Ascending aorta (tissue), 2 donors: ENCODE measurements at regions of chr5 and their contacts with region 1.

Region 1: DNA sequence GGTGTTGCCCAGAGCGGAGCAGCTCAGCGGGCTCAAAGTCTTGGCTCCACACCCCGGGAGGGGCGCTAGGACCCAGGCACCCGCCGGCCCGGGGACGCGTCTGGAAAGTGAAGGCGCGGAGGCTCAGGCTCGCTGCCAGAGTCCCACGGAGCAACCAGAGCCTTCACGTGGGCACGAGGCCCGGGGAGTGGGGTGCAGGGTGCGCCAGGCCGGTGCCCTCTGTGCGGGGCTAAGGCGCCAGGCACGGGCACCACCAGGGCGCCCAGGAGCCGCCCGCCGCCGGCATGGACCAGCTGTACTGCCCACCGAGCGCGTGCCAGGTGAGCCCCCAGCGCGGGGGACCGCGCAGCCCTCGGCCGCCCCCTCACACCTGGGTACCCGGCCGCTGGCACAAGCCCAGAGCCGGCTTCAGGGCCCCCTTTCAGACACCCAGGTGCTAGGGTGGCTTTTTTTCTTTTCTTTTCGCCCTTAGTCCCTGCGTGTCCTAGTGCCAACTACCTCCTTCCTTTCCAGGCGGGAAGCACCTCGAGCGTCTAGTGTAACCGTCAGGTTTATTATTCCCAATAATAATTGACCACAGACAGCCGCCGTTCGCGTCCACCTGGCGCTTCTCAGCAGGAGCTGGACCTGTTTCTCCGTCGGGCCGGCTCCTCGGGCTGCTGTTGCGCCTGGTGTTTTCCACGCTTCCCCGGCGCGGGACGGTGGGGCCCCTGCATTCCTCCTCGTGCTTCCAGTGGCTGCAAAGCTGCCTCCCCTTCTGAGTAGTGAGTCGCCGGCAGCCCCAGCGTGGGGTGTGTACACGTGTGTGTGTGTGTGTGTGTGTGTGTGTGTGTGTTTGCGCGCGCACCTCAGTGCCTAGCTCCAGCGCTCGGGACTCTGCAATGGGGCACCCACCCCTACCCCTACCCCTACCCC is 30.1 kb upstream of the PDE8B start:
- DNase-seq: peak in 1 of 2 donors; percentile 76
- H3K4me3 ChIP-seq: peak overlapping the region; percentile 54 to 79
- H3K27ac ChIP-seq: peak overlapping the region; percentile 25 to 64
- H3K4me1 ChIP-seq: no peaks in the 10 kb centered on the region
- H3K27me3 ChIP-seq: no peaks in the 10 kb centered on the region
- CTCF ChIP-seq: no peak

Region 2: DNA sequence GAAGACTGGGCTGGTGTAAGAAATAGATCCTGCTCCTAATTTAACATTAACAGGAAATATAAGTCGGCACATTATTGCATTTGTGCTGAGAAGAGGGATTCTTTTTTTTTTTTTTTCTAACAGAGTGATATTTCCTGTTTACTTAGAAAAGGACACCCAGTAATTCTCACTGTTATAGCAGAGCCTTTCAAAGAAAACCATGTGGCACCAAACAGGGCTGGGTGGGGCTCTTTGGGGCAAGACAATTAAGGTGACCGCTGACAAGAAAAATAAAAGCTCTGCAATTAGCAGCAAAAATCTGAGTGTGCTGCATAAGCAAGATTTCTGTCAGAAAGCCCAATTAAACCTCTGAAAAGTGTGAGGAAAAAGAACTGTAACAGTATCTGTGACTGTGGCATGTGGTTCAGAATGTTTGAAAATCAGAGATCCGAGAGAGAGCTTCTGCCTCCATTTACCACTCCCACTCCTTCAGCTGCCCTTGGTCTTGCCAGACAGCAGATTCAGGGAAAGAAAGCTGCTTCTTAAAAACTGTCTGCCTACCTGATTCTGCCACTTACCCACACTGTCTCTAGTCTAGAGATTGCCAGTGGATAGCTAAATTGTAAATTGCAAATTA is 854.4 kb before region 1 on chr5:
- intact Hi-C with region 1: no loop called
- DNase-seq: peak in 1 of 2 donors; percentile 64
- H3K4me3 ChIP-seq: no peak overlapping the region
- H3K27ac ChIP-seq: no peak overlapping the region
- H3K4me1 ChIP-seq: no peaks in the 10 kb centered on the region
- H3K27me3 ChIP-seq: no peaks in the 10 kb centered on the region
- CTCF ChIP-seq: no peak

Region 3: DNA sequence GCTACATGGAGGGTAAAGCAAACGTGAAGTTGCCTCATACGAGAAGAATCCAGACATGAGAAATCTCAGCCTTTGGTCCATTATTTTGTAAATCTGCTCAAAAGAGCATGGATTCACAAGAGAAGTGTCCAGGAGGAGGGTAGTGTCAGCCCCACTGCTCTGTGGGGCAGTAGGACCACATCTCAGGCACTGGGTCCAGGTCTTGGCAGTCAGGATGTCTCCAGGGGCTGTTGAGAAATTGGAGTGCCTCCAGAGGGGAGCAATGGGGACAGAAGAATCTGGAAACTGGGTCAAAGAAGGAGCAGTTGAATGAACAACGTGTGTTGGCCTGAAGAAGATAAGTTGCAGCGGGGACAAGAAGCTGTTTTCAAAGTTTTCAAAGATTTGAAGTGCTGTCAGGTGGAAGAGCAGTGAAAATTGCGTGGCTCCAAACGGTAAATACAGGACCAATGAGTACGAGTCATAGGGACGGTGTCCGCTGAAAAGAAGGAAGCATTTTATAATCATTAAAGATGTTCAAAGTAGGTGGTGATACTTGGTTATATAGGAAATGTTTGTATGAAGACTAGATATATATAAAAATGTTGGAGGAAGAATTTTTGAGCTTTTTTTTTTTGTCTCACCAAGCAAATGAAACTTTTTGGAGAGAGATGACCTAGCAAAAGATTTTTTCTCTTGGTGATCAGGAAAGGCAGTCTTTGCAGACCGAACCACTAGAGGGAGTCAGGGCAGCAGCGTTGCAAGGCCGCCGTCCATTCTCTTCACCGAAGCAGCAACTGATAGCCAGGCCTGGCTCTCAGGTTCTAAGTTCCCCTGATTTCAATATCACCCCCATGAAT is 36.2 kb before region 1 on chr5:
- intact Hi-C with region 1: loop called (anchors 5 kb)
- DNase-seq: peak in 1 of 2 donors; percentile 86
- H3K4me3 ChIP-seq: no peak overlapping the region
- H3K27ac ChIP-seq: peak overlapping the region; percentile 54 to 58
- H3K4me1 ChIP-seq: peaks cover 0 to 6% of the 10 kb centered on the region in 2 donors
- H3K27me3 ChIP-seq: no peaks in the 10 kb centered on the region
- CTCF ChIP-seq: peak; percentile 60 to 83 (median 82)

Region 4: DNA sequence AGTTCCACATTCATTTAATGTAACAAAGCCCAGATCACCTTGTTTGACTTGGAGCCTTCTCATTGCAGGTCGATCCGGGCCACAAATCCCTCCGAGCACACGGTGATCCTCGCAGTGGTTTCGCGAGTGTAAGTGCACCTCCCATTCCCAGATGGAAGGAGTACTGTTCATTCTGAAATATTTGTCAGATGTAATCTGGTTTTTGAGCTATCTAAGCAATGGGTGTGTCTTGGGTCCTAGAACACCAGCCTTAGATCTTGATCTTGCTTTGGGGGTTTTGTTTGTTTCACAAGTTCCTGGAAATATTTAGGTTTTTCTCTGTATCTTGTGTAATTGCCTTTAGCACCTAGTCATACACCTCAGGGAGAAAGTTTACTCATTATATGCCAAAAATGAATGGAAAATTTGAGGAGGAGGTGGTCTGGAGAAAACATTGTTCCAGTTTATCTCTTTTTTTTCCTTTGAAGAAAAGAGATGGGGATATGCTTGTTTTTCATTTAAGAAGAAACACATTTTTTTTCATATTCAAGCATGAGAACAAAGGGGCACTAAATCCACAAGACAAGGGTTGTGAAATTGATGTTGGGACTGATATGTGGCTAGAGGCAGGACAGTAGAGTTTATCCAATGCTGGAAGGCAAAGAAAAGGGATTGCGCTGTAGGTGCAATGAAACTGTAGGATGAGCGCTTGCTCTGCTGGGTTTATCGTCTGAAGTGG is 148.7 kb after region 1 on chr5:
- intact Hi-C with region 1: no loop called
- DNase-seq: no peak
- H3K4me3 ChIP-seq: no peak overlapping the region
- H3K27ac ChIP-seq: peak overlapping the region; percentile 66 to 75
- H3K4me1 ChIP-seq: peaks cover 4 to 29% of the 10 kb centered on the region in 2 donors
- H3K27me3 ChIP-seq: no peaks in the 10 kb centered on the region
- CTCF ChIP-seq: no peak

Region 5: GRCh38 chr5:77390221-77390620 is 209.8 kb after region 1 on chr5:
- intact Hi-C with region 1: no loop called
- DNase-seq: no peak
- H3K4me3 ChIP-seq: no peak overlapping the region
- H3K27ac ChIP-seq: peak overlapping the region; percentile 73 to 74
- H3K4me1 ChIP-seq: peaks cover 3 to 30% of the 10 kb centered on the region in 2 donors
- H3K27me3 ChIP-seq: no peaks in the 10 kb centered on the region
- CTCF ChIP-seq: no peak

Region 6: DNA sequence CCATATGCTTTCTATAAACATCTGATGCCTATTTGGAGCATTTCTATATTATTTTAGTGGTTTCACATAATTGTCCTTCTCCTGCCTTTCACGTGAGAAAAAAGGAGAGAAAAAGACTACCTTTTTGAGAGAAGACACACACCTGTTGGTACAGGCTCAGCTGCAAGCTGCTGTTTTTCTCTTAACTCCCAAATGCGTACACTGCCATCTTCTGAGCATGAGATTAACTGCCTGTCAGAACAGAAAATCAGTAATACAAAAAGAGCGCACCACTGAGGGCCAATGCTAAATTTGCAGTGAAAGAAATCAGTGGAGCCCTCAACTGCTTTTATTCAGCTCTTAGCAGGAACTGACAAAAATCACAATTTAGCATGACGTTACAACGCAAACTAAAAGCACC is 256.8 kb after region 1 on chr5:
- intact Hi-C with region 1: loop called (anchors 5 kb)
- DNase-seq: no peak
- H3K4me3 ChIP-seq: no peak overlapping the region
- H3K27ac ChIP-seq: no peak overlapping the region
- H3K4me1 ChIP-seq: no peaks in the 10 kb centered on the region
- H3K27me3 ChIP-seq: no peaks in the 10 kb centered on the region
- CTCF ChIP-seq: peak in 2 of 3 experiments; percentile 32 to 57